ENCODE measurements at regions of chr21 and their contacts with region 1.

Region 1: DNA sequence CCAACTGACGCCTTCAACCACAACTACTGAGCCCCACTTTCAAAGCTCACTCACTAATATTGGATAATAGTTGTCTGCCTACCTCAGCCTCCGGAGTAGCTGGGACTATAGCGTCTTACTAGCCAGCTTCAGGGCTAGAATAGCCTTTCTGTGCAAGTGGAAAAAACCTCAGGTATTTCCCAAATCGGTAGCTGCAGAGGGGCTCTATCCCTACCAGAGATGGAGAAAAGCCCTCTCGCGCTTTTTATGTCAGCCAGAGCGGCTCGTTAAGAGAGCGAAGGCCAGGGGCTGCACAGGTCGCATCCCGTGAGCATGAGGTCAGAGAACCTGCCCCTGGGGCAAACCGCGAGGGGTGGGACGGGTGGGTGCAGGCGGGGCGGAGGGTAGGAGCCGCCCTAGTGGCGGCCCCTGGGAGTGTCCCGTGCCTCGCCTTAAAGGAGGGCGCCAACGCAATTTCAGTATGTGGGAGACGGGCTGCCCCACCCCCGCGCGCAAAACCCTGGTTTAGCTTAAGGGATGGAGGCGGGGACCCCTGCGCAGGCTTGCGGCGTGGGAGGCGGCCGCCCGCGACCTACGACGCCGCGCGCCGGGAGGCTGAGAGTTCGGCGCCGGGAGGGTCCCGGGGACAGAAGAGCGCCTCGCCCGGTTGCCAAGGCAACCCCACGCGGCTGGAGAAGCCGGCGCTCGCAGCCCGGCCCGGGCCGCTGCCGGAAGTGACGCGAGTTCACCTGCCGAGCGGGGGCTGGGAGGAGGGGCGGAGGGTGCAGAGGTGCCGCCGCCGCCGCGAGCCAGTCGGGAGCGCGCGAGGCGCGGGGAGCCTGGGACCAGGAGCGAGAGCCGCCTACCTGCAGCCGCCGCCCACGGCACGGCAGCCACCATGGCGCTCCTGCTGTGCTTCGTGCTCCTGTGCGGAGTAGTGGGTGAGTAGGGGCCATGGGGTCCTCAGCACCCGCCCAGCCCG is at the start of gene CXADR:
- DNase-seq: peak; percentile 73 to 86 (median 84)
- ATAC-seq: peak; percentile 89
- H3K4me3 ChIP-seq: peak within 1 kb of the TSS; percentile 66
- H3K4me3 Mint-ChIP-seq: peak within 1 kb of the TSS; percentile 81 to 92 (median 90)
- H3K27ac ChIP-seq: peak within 1 kb of the TSS; percentile 59
- H3K27ac Mint-ChIP-seq: peak within 1 kb of the TSS; percentile 30 to 92 (median 55)
- H3K4me1 ChIP-seq: peaks cover 11% of the 10 kb centered on the region in 2 donors
- H3K4me1 Mint-ChIP-seq: peaks cover 15 to 26% (median 22%) of the 10 kb centered on the region in 7 donors
- H3K27me3 ChIP-seq: no peaks in the 10 kb centered on the region
- H3K27me3 Mint-ChIP-seq: peaks cover 0 to 60% (median 3%) of the 10 kb centered on the region in 5 donors
- total RNA-seq, gene CXADR: 0.12 to 1.8 (median 0.51) TPM

Region 2: DNA sequence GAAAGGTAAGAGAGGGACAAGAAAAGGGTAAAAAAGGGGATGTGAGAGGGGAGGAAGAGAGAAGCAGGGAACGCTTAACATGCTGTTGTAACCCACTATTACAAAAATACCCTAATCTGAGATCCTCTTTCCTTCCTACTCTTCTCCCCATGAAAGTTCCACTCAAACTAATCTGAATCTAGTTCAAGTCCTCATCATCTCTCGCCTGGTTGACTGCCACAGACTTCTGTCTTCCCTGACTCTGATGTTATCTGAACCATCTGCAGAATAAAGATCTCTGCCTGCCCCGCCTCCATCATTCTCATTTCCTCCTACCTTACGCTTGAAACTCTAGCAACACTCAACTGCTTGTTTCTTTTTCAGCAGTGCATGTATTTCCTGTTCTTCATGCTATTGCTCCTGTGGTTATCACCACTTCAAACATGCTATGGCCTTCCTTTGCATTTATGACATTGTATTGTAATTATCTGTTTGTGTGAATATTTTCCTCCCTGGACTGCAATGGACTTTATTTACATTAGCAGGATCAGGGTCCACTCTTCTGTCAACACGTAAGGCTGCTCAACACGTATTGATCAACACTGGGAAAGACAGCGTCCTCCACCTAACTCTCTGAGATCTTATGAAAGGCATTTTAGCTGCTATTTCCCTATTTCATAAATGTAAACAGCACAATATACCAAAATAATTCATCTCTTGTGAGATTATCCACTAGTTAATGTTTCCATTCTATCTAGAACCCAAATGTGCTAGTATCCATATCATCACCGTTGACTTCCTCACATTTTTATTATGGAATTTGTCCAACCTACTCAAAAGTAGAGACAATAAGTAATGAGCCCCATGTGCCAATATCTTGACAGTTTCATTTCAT is 1998.2 kb before region 1 on chr21:
- CTCF ChIA-PET with region 1: no interaction called
- POLR2A ChIA-PET with region 1: no interaction called
- intact Hi-C with region 1: loop called in 1 of 2 experiments (anchors 2 kb)
- DNase-seq: peak in 8 of 9 donors; percentile 34 to 87 (median 82)
- ATAC-seq: peak; percentile 99
- H3K4me3 ChIP-seq: peak overlapping the region; percentile 23
- H3K4me3 Mint-ChIP-seq: peak overlapping the region; percentile 59 to 76 (median 69)
- H3K27ac ChIP-seq: peak overlapping the region; percentile 46
- H3K27ac Mint-ChIP-seq: peak overlapping the region; percentile 75 to 94 (median 87)
- H3K4me1 ChIP-seq: peaks cover 12 to 32% of the 10 kb centered on the region in 2 donors
- H3K4me1 Mint-ChIP-seq: peaks cover 16 to 54% (median 31%) of the 10 kb centered on the region in 7 donors
- H3K27me3 ChIP-seq: no peaks in the 10 kb centered on the region
- H3K27me3 Mint-ChIP-seq: no peaks in the 10 kb centered on the region

Region 3: GRCh38 chr21:17387030-17387617 is 125.4 kb before region 1 on chr21:
- CTCF ChIA-PET with region 1: no interaction called
- POLR2A ChIA-PET with region 1: no interaction called
- intact Hi-C with region 1: loop called in 1 of 2 experiments (anchors 1 kb)
- DNase-seq: peak in 7 of 9 donors; percentile 25 to 64 (median 56)
- ATAC-seq: peak; percentile 77
- H3K4me3 ChIP-seq: no peak overlapping the region
- H3K4me3 Mint-ChIP-seq: no peak overlapping the region
- H3K27ac ChIP-seq: no peak overlapping the region
- H3K27ac Mint-ChIP-seq: no peak overlapping the region
- H3K4me1 ChIP-seq: no peaks in the 10 kb centered on the region
- H3K4me1 Mint-ChIP-seq: peaks cover 0 to 4% (median 0%) of the 10 kb centered on the region in 7 donors
- H3K27me3 ChIP-seq: no peaks in the 10 kb centered on the region
- H3K27me3 Mint-ChIP-seq: peaks cover 0 to 4% (median 0%) of the 10 kb centered on the region in 5 donors

Region 4: DNA sequence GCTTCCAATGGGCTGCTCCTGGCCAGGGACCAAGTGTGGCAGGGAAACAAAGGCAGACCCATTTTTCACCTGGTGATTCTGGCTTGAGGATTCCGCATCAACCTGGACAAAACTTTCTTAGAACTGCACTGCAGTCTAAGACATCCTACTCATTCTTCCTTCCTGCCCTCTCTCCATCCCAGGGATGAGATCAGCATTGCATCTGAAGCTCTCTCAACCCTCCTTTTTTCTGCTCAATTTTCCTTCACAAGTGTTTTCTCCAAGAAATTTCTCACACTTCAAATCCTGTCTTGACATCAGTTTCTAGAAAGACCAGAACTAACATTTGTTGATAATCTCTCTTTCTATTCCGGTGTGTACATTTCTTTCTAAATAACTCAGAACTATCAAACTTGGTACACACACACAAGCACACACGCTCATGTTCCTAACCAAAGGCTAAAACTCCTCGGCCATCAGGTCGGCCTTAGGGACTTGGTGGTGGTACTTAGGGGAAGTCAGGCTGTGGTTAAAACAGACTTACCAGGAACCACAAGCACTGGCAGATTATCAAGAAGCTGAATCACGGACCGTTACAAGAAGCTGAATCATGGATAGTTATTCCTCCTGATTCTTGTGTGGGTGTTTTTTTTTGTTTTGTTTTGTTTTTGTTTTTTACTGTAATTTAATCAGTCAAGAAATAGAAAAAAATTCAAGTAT is 20.7 kb before region 1 on chr21:
- CTCF ChIA-PET with region 1: no interaction called
- POLR2A ChIA-PET with region 1: no interaction called
- intact Hi-C with region 1: loop called in 1 of 2 experiments (anchors 2 kb)
- DNase-seq: no peak
- ATAC-seq: peak; percentile 24
- H3K4me3 ChIP-seq: no peak overlapping the region
- H3K4me3 Mint-ChIP-seq: no peak overlapping the region
- H3K27ac ChIP-seq: no peak overlapping the region
- H3K27ac Mint-ChIP-seq: no peak overlapping the region
- H3K4me1 ChIP-seq: no peaks in the 10 kb centered on the region
- H3K4me1 Mint-ChIP-seq: peaks cover 0 to 19% (median 0%) of the 10 kb centered on the region in 7 donors
- H3K27me3 ChIP-seq: no peaks in the 10 kb centered on the region
- H3K27me3 Mint-ChIP-seq: peaks cover 0 to 30% (median 21%) of the 10 kb centered on the region in 5 donors

Region 5: DNA sequence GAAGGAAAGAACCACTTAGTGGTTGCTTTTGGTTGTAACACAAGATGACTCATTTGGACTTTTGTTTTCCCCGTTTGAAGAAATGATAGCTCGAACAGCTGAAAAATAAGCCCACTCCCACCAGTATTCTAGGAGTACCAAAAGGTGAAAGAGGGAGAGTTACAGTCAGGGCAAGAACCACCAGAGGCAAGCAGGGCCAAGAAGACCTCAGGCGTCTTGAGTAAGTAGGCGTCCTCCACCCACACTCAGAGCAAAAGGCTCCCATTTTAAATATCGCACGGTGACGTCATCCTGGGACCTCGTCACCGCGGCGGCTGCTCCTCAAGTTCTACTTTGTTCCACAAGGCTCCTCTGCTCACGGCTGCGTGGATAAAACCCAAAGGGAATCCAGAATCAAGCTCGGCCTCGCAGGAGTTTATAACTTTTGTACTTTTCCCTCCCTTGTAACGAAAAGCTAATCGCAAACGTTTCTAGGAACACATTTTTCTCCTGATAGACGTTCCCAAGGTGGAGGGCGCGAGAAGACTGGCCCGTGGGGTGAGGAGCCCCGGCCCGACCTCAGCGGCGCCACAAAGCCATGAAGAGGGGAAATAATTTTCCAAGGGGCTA is 99.0 kb after region 1 on chr21:
- CTCF ChIA-PET with region 1: interaction called, 3 read pairs
- POLR2A ChIA-PET with region 1: interaction called, 4 read pairs
- intact Hi-C with region 1: loop called (anchors 1 to 2 kb)
- DNase-seq: peak; percentile 57 to 84 (median 73)
- ATAC-seq: peak; percentile 72
- H3K4me3 ChIP-seq: peak overlapping the region; percentile 83
- H3K4me3 Mint-ChIP-seq: peak overlapping the region; percentile 85 to 98 (median 90)
- H3K27ac ChIP-seq: peak overlapping the region; percentile 72
- H3K27ac Mint-ChIP-seq: peak overlapping the region; percentile 77 to 100 (median 93)
- H3K4me1 ChIP-seq: peaks cover 0 to 7% of the 10 kb centered on the region in 2 donors
- H3K4me1 Mint-ChIP-seq: peaks cover 7 to 65% (median 19%) of the 10 kb centered on the region in 7 donors
- H3K27me3 ChIP-seq: no peaks in the 10 kb centered on the region
- H3K27me3 Mint-ChIP-seq: no peaks in the 10 kb centered on the region